ENCODE measurements at regions of chr11 and their contacts with region 1.

Region 1: GRCh38 chr11:118791111-118791965 is at the start of gene DDX6:
- DNase-seq: peak; percentile 99
- H3K4me3 ChIP-seq: peak within 1 kb of the TSS; percentile 74 to 98 (median 88)
- H3K27ac ChIP-seq: peak within 1 kb of the TSS; percentile 99 to 100 (median 100)
- H3K4me1 ChIP-seq: peaks cover 25 to 60% (median 40%) of the 10 kb centered on the region in 6 donors
- H3K27me3 ChIP-seq: no peaks in the 10 kb centered on the region
- CTCF ChIP-seq: peak in 7 of 11 experiments; percentile 19 to 55 (median 44)
- POLR2A ChIP-seq: peak; percentile 72 to 86 (median 81)
- total RNA-seq, gene DDX6: 146 to 206 (median 179) TPM

Region 2: GRCh38 chr11:118672846-118673245 is 118.5 kb before region 1 on chr11:
- intact Hi-C with region 1: no loop called
- DNase-seq: no peak
- H3K4me3 ChIP-seq: no peak overlapping the region
- H3K27ac ChIP-seq: no peak overlapping the region
- H3K4me1 ChIP-seq: no peaks in the 10 kb centered on the region
- H3K27me3 ChIP-seq: no peaks in the 10 kb centered on the region
- CTCF ChIP-seq: no peak
- POLR2A ChIP-seq: no peak

Region 3: GRCh38 chr11:118889781-118890180 is 98.4 kb after region 1 on chr11:
- intact Hi-C with region 1: loop called (anchors 5 kb)
- DNase-seq: no peak
- H3K4me3 ChIP-seq: peak overlapping the region in 2 of 8 donors; percentile 54 to 73
- H3K27ac ChIP-seq: peak overlapping the region in 7 of 8 donors; percentile 21 to 89 (median 82)
- H3K4me1 ChIP-seq: peaks cover 45 to 94% (median 74%) of the 10 kb centered on the region in 6 donors
- H3K27me3 ChIP-seq: no peaks in the 10 kb centered on the region
- CTCF ChIP-seq: no peak
- POLR2A ChIP-seq: no peak